GM10248 (cell line): ENCODE measurements at regions of chr3 and their contacts with region 1.

Region 1: DNA sequence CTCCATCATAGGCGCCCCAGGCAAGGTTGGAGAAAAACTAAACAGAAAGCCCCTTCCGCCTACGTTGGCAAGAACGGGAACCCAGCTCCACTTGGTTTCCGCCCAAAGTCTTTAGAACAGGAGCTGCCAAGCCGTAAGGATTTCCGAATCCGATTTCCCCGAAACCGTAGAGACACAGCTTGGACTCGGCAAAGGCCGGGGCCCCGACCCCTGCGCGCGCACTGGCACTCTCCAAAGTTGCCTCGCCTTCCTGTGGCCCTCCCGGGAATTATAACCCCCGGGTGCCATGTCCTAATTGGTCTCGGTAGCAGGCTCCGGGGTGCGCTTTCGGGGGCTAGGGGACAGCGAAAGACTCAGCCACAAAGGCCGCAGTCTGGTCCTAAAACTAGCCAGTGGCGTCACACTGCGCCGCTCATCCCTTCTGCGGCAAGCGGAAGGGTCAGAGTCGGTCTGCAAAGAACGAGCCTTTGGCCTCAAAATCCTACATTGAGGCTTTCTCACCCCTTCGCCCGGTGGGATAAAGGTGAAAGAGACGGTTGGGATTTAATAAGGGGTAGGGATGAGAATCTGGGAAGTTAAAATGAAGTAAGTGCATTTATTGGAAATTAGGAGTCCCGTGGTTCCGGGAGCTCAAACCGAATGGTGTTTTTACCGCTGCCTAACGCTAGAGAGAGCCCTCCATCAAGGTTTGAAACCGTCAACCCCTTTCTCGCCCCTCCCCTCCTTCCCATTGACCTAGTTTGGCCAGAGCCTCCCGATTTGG is 6.8 kb downstream of the BCL6 start:
- DNase-seq: peak; percentile 81
- CTCF ChIP-seq: peak; percentile 71

Region 2: DNA sequence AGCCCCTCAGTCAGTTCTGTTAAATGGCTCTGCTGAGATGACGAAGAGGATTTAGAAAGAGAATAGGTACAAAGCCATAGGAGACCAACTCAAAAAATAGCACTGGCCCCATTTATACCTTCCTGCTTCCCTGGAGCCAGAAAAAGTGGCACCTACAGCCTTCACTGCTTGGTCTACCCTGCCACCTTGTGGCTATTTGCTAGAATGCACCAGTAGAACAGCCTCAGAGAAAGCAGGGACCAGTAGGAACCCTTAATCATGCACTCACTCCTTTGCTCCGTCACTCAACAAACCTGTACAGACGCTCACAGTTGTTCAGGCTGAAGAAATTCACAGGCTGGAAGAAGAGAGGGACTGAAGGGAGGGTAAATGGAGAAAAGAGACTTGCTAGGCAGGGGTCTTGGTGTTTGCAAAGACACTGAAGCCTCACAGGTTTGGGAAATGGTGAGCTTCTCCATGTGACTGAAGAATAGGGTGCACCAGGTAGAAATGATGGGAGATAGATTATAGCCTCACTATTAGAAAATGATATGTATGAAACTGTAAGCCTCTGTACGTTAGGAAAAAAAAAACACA is 24.0 kb before region 1 on chr3:
- CTCF ChIA-PET with region 1: interaction called, 32 read pairs
- POLR2A ChIA-PET with region 1: no interaction called
- DNase-seq: peak; percentile 66
- CTCF ChIP-seq: peak; percentile 82

Region 3: DNA sequence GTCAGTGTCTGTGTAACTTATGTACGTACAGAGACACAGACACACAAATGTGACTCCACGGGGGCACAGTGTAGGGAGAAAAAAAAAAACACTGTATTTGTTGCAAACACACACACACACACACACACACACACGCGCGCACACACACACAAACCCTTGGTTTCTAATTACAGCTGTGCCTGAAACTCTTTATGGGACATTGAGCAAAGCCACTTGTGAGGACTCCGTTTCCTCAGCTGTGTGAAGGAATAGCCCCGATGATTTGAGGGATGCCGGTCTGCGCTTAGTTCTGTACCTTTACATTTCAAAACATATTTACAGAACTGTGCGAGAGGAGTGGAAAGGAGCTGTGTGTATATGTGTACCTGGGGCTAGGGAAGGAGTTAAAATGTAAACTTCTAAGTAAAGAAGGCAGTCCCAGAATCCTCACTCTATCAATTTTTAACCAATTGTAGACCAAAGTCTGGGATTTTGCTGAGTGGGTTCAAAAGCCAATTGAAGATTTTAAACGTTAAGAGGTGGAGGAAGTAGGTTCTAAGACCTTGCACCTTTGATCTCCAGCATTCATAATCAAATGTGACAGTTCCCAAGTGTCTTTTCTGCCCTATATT is 12.1 kb after region 1 on chr3:
- CTCF ChIA-PET with region 1: interaction called, 54 read pairs
- POLR2A ChIA-PET with region 1: no interaction called
- DNase-seq: no peak
- CTCF ChIP-seq: no peak

Region 4: GRCh38 chr3:188400494-188401243 is 662.2 kb after region 1 on chr3:
- CTCF ChIA-PET with region 1: interaction called, 12 read pairs
- POLR2A ChIA-PET with region 1: no interaction called
- DNase-seq: peak; percentile 52
- CTCF ChIP-seq: no peak

Region 5: DNA sequence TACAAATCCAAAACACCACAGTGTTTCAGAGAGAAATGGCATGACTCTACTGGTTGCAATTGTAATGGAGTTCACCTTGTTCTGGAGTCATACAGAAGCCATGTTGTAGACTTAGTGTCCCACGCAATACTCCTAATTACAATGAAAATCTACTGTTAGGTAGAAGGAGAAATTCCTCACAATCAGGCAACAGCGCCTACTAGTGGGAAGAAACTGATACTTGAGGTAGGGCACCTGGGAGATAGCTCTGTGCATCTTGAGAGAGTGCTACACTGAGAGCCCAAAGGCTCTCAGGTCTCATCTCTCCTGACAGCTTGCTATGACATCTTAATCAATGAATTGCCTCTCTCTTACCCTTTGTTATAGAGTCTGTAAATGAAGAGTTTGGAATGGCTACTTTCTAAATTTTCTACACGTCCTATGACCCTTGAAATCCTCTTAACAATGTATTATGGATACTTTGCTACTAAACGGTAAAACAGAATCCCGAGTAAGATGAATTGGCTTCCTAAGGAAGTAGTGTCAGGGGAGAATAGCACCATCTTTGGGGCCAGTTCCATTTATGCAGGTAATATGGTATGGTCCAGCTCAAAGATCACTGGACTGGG is 1010.6 kb after region 1 on chr3:
- CTCF ChIA-PET with region 1: interaction called, 19 read pairs
- POLR2A ChIA-PET with region 1: no interaction called
- DNase-seq: peak; percentile 14
- CTCF ChIP-seq: peak; percentile 63

Region 6: DNA sequence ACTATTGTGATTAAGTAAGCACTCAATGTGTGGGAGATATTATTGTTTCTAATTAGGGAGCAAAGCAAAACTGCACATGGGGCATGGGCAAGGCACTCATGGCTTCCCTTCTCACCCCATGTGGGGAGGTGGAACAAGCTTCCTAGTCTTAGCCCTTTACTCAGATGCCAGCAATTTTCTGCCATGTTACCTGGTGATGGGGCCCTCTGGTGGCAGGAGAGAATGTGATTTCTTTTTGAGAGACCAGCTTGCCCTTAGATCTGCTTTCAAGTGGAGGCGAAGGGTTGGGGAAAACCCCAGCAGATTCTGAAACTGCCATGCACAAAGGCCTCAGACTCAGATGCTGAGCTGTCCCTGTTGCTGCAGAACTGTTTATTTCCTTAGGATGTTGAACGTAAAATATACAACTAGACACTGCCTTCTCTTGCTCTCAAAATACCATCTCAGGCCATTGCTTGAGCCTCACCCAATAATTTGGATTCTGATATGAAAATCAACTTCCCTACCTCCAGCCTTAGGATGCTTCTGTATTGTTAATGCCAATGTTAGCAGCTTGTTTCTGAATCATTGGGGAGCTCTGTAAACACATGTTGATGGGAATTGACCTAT is 1303.1 kb after region 1 on chr3:
- CTCF ChIA-PET with region 1: interaction called, 52 read pairs
- POLR2A ChIA-PET with region 1: no interaction called
- DNase-seq: peak; percentile 58
- CTCF ChIP-seq: peak; percentile 57

Region 7: DNA sequence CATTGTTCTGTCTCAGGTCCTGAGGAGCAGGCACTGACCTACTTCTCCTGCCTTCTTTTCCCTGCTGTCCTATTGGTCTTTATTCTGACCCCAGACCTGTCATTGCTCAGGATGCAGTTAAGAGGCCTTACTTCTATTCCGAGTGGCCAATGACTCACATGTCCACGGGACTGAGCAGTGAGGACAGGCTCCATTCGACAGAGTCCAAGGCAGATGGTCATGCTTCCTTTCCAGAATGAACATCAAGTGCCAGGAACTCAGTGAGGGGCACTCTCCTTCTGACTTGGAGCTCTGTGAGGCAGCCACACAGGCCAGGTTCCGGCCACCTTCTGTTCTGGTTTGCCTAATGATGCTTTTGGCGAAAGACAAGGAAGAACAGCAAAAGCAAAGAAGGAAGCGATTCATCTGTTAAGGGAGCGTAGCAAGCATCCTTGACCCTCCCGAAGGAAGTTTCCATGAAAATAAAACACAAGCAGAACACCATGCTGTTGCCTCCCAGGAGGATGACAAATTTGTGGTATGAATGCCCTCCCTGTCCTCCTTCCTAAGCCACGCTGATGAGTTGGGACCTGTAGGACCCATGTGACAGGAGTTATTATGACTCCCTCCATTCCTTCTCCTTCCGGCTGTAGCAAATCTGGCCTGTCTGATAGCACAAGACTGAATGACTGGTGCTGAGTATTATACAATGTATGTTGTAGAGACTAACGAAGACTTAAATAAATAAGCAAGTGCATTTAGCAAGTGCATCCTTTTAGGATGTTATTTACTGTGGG is 1418.9 kb after region 1 on chr3:
- CTCF ChIA-PET with region 1: interaction called, 34 read pairs
- POLR2A ChIA-PET with region 1: interaction called, 3 read pairs
- DNase-seq: no peak
- CTCF ChIP-seq: no peak